Naive thymus-derived CD4-positive, alpha-beta T cell (primary cell): ENCODE measurements at regions of chr12 and their contacts with region 1.

Region 1: GRCh38 chr12:6341417-6342139 is at the start of gene TNFRSF1A:
- DNase-seq: peak in 7 of 9 donors; percentile 45 to 66 (median 54)
- ATAC-seq: peak; percentile 60
- H3K4me3 ChIP-seq: peak within 1 kb of the TSS; percentile 88
- H3K4me3 Mint-ChIP-seq: no peak within 1 kb of the TSS
- H3K27ac ChIP-seq: peak within 1 kb of the TSS; percentile 92
- H3K27ac Mint-ChIP-seq: peak within 1 kb of the TSS in 3 of 9 donors; percentile 95 to 97 (median 95)
- H3K4me1 ChIP-seq: peaks cover 54 to 56% of the 10 kb centered on the region in 2 donors
- H3K4me1 Mint-ChIP-seq: peaks cover 32 to 43% (median 39%) of the 10 kb centered on the region in 7 donors
- H3K27me3 ChIP-seq: no peaks in the 10 kb centered on the region
- H3K27me3 Mint-ChIP-seq: no peaks in the 10 kb centered on the region
- total RNA-seq, gene TNFRSF1A: 40.9 to 99.4 (median 67.3) TPM

Region 2: DNA sequence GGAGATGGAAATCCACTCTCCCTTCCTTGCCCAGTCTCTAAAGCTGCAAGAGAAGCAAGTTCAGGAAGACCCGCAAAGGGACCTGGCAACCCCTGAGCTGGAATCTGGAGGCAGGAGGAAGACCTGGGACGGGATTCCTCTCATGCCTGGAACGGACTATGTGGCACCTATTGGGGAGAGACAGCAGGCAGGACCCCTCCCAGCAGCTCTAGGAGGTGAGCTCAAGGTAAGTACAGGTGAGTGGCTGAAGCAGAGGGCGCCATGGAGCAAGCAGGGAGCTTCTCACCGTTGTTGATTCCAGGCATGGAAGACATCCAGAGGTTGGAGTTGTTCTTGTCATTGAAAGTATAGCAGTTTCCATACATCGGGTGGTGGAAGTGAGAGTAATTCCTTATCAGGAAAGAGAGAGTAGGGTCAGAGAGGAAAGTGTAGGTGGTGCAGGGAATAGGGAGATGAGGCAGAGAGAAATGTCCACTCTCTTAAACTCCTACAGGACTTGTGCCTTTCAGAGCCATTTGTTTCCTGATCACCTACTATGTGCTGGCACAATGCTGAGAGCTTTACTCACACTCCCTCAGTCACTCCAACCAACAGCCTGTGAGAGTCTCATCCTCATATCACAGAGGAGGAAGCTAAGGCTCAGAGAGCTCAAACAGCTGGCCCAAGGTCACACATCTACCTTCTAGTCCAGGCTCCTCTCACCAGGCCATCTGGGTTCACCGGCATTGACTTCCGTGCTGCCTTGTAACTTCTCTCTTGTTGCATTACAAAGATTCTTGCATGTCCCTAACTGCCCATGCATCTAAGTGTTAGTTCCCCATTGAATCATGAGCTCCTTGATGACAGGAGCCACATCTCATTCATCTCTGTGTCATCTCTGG is 14.2 kb after region 1 on chr12:
- CTCF ChIA-PET with region 1: interaction called, 7 read pairs
- POLR2A ChIA-PET with region 1: interaction called, 342 read pairs
- intact Hi-C with region 1: no loop called
- DNase-seq: no peak
- ATAC-seq: peak; percentile 78
- H3K4me3 ChIP-seq: no peak overlapping the region
- H3K4me3 Mint-ChIP-seq: no peak overlapping the region
- H3K27ac ChIP-seq: no peak overlapping the region
- H3K27ac Mint-ChIP-seq: peak overlapping the region in 3 of 9 donors; percentile 19 to 79 (median 26)
- H3K4me1 ChIP-seq: no peaks in the 10 kb centered on the region
- H3K4me1 Mint-ChIP-seq: peaks cover 9 to 23% (median 12%) of the 10 kb centered on the region in 7 donors
- H3K27me3 ChIP-seq: no peaks in the 10 kb centered on the region
- H3K27me3 Mint-ChIP-seq: peaks cover 0 to 17% (median 0%) of the 10 kb centered on the region in 5 donors